ENCODE measurements at regions of chr11 and their contacts with region 1.

Region 1: DNA sequence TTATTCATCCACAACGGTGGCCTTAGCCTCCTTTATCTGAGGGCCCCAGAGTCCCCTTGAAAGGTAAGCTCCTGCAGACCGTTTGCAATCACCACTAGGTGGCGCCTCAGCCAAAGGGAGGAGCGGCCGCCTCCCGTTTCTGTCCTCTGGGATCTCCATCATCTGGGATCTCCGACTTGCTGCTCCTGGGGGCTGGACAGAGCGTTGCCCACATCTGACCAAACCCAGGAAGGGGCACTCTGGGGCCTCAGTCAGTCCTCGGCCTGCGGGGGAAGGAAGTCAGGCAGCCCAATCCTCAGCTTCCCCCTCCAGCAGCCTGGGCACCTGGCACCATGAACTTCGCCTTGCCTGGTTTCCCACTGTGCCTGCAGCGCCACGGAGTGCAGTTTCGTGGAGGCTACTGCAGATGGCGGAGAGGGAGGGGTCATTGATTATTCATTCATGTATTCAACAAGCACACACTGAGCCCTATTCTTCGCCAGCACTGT is 23.5 kb downstream of the TP53I11 start:
- DNase-seq: peak; percentile 44 to 88 (median 65)
- ATAC-seq: peak; percentile 80
- H3K4me3 ChIP-seq: no peak overlapping the region
- H3K27ac ChIP-seq: no peak overlapping the region
- H3K4me1 ChIP-seq: no peaks in the 10 kb centered on the region
- H3K27me3 ChIP-seq: no peaks in the 10 kb centered on the region
- CTCF ChIP-seq: peak; percentile 78 to 88

Region 2: GRCh38 chr11:45278714-45279113 is 351.5 kb after region 1 on chr11:
- intact Hi-C with region 1: loop called in 1 of 2 experiments (anchors 10 kb)
- DNase-seq: no peak
- ATAC-seq: no peak
- H3K4me3 ChIP-seq: no peak overlapping the region
- H3K27ac ChIP-seq: no peak overlapping the region
- H3K4me1 ChIP-seq: no peaks in the 10 kb centered on the region
- H3K27me3 ChIP-seq: peaks cover 0 to 26% of the 10 kb centered on the region in 2 donors
- CTCF ChIP-seq: no peak

Measured in left lung (tissue), 14 donors.